ENCODE measurements at regions of chr3 and their contacts with region 1.

Region 1: DNA sequence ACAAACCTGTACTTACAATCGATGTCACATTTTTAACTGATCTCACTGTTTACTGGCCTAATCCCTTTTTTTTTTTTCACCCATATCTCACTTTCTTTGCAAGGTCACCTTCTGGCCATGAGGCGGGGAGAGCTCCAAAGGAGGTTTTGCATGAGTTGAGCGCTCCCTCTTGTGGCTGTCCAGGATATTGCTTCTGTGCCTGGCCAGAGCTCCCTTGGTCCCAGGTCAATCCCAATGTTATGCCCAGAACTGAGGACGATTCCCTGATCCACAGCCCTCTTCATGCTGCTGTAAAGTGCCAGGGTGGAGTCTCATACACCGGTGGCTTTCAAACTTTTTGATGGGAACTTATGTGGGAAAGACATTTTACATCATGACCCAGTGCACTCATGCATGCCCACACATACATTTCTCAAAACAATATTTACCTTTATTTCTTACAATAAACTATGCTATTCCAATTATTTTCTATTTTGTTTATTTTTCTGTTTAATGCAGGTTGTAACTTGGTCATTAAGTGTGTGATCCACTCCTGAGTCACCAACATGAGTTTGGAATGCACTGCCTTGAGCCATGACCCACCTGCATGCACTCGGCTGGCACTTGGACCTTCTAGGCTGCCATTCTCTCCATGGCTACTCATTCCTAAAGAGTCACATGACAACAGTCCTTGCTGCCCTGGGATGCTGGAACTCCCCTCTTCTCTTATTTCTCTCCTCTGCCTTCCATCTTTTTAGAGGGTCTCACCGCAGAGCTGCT is 9.6 kb upstream of the SST start:
- DNase-seq: peak; percentile 90
- H3K4me3 Mint-ChIP-seq: no peak overlapping the region
- H3K27ac Mint-ChIP-seq: no peak overlapping the region
- H3K4me1 Mint-ChIP-seq: peaks cover 7% of the 10 kb centered on the region
- H3K27me3 Mint-ChIP-seq: peaks cover 41% of the 10 kb centered on the region

Region 2: GRCh38 chr3:187223799-187224198 is 456.0 kb before region 1 on chr3:
- intact Hi-C with region 1: loop called (anchors 2 kb)
- DNase-seq: no peak
- H3K4me3 Mint-ChIP-seq: no peak overlapping the region
- H3K27ac Mint-ChIP-seq: no peak overlapping the region
- H3K4me1 Mint-ChIP-seq: no peaks in the 10 kb centered on the region
- H3K27me3 Mint-ChIP-seq: peaks cover 11% of the 10 kb centered on the region

Region 3: DNA sequence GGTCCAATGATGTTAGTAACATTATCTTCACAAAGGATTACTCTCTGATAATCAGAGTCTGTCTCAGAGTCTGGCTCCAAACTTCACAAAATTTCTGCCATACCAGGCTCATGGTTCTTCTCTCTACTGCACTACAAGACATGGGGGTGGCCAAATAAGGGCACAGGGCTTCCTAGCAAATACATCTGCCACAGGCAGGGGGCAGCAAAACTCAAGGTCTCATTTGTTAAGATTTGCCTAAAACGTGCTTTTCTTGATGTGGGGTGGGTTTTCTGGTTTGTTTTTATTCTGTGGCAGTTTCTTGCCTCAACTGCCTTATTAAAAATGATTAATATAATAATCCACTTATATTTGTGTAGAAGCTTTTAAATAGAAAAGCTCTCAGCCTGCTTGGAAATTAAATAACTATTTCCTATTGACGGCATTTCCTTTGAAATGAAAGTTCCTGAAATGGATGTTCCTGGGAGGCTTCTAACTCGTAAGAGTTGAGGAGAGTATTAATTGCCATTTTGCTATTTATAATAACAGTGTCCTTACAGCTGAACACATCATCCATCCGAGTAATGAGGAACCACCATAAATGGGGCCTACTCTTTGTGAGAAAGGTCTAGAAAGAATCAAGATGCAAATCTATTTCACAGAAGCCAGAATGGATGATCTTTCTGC is 63.4 kb before region 1 on chr3:
- intact Hi-C with region 1: loop called (anchors 1 kb)
- DNase-seq: peak; percentile 84
- H3K4me3 Mint-ChIP-seq: no peak overlapping the region
- H3K27ac Mint-ChIP-seq: no peak overlapping the region
- H3K4me1 Mint-ChIP-seq: no peaks in the 10 kb centered on the region
- H3K27me3 Mint-ChIP-seq: peaks cover 16% of the 10 kb centered on the region

Region 4: DNA sequence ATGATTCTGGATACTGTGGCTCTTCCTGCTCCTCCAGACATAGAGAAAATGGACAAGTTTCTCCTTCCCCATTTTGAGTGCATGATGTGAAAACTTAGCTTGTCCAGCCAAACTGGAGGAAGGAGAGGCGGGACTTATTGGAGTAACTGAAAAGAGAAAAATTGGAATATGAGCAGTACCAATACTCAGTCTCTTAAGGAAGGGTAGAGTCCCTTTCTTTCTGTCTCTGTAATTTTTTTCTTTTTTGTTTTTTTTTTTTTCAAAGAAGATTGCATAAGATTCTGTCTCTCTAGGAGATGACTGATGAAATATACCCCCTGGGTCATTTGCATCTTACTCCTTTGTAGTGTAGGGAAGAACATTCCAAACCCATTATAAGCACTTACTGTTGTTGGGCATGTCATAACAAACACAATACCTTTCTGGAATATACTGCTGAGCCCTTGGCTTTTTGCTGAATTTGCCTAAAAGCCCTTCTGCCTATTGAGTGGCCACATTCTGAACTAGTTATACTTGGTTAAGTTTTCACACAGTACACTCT is 993.9 kb after region 1 on chr3:
- intact Hi-C with region 1: no loop called
- DNase-seq: no peak
- H3K4me3 Mint-ChIP-seq: no peak overlapping the region
- H3K27ac Mint-ChIP-seq: no peak overlapping the region
- H3K4me1 Mint-ChIP-seq: peaks cover 10% of the 10 kb centered on the region
- H3K27me3 Mint-ChIP-seq: no peaks in the 10 kb centered on the region